Heart right ventricle (tissue), 16 donors: ENCODE measurements at regions of chr13 and their contacts with region 1.

Region 1: GRCh38 chr13:25574437-25575411 is 202.9 kb downstream of the ATP8A2 start:
- DNase-seq: peak; percentile 15 to 85
- ATAC-seq: peak; percentile 65 to 94 (median 90)
- H3K4me3 ChIP-seq: no peak overlapping the region
- H3K27ac ChIP-seq: no peak overlapping the region
- H3K4me1 ChIP-seq: no peaks in the 10 kb centered on the region
- H3K27me3 ChIP-seq: peaks cover 0 to 69% (median 40%) of the 10 kb centered on the region in 7 donors
- CTCF ChIP-seq: peak; percentile 53 to 90 (median 84)

Region 2: DNA sequence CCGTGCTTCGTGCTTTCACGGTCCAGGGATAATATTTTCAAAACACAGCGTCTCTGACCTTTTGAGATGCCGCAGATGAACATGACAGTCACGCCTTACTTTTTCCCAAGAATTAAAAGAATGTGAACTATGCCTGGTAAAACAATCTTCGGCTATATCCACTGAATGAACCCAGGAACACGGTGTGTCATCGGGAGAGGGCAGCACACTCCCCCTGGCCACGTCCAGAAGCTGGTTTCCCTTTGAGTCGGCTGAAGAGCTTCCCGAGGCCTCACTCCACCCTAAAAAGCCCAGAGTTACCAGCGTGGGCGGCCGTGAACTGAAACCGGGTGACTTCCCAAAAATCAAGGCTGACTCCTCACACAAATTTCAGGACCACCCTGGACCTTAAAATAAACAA is 500.0 kb after region 1 on chr13:
- intact Hi-C with region 1: loop called in 2 of 10 experiments (anchors 5 kb)
- DNase-seq: no peak
- ATAC-seq: no peak
- H3K4me3 ChIP-seq: no peak overlapping the region
- H3K27ac ChIP-seq: no peak overlapping the region
- H3K4me1 ChIP-seq: no peaks in the 10 kb centered on the region
- H3K27me3 ChIP-seq: peaks cover 0 to 31% (median 22%) of the 10 kb centered on the region in 7 donors
- CTCF ChIP-seq: peak in 1 of 9 donors; percentile 14